Astrocyte of the cerebellum (primary cell): ENCODE measurements at regions of chr5 and their contacts with region 1.

Region 1: DNA sequence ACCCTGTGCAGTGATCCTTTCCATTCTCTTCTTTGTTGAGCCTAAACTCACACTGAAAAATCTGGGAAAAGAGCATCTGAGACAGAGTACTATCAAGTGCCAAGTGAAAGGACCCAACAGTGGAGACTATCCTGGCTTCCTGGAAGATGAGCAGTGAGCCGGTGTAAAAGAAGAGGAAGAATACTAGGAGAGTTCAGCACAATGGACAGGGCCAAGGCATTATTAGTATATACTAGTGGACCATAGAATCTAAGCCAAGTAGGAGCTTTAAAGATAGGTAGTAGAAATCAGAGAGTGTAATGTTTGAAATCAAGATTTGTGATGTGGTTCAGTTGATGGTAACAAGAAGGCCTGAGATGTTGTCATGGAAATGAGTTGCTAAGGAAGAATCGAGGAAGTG is 140.8 kb downstream of the CAMK4 start:
- DNase-seq: peak; percentile 3
- H3K4me3 ChIP-seq: no peak overlapping the region
- CTCF ChIP-seq: no peak

Region 2: GRCh38 chr5:111271885-111272284 is 93.1 kb before region 1 on chr5:
- in situ Hi-C with region 1: no loop called
- DNase-seq: no peak
- H3K4me3 ChIP-seq: no peak overlapping the region
- CTCF ChIP-seq: no peak

Region 3: DNA sequence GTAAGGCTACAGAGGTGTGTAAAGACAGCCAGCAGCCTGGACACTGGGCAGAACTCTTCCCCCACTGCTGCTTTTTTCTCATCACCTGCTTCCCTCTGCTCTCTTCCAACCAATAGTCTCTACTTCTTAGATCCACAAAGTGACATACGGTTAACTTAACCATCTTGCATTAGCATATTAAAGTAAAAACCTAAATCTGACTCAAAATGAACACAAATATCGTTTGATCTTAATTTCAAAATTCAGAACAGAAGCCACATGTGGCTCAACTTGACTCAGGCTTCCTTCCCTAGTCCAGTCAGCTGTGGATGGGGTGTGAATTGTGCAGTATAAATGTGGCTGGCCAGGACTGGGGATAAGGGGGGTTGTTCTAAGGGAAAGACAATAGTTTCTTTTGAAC is 33.0 kb after region 1 on chr5:
- in situ Hi-C with region 1: loop called (anchors 5 kb)
- DNase-seq: no peak
- H3K4me3 ChIP-seq: no peak overlapping the region
- CTCF ChIP-seq: no peak